ENCODE measurements at regions of chr22 and their contacts with region 1.

Region 1: GRCh38 chr22:27804470-27805297 is 3.1 kb upstream of the MN1 start:
- DNase-seq: peak; percentile 71 to 82 (median 74)
- ATAC-seq: peak in 3 of 4 donors; percentile 57 to 68 (median 67)
- H3K4me3 ChIP-seq: no peak overlapping the region
- H3K27ac ChIP-seq: no peak overlapping the region
- H3K4me1 ChIP-seq: peaks cover 0 to 38% (median 16%) of the 10 kb centered on the region in 12 donors
- H3K27me3 ChIP-seq: peaks cover 0 to 28% (median 4%) of the 10 kb centered on the region in 9 donors
- CTCF ChIP-seq: peak; percentile 54 to 81 (median 75)
- POLR2A ChIP-seq: no peak

Region 2: DNA sequence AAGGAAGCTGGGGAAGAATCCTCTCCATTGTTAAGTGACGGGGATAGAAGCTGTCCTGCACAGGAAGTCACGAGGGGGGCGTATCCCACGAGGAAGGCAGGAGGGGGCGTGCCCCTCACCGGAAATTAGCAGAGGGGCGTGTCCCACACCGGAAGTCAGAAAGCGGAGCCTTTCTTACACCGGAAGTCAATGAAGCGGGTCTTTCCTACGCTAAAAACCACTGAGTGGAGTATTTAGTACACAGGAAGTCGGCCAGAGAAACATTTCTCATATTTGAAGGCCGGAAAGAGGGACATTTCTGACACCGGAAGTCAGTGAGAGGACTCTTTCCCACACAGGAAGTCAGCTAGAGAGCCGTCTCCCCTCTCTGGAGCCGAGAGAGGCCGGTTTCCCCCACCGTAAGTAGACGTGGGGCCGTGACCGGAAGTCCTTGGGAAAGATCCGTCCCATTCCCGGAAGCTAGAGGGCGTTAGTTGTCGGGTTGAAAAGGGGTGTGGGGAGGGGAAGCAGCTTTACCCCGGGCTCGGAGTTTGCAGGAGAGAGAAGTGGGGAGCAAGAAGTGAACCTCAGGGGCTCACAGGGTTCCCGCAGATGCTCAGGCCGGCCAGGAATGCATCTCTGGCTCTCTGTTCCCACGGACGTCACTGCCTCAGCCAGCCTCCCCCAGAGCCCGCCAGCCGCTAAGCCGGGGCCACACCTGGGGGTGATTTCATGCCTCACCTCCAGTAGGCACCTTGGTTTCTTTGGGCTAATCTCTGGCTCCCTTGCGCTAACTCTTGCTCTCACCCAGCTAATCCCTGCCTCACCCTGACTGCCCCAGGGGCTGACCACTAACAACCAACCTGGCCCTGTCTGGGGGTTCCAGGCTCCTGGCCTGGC is 1131.9 kb before region 1 on chr22:
- intact Hi-C with region 1: loop called in 6 of 10 experiments (anchors 5 to 10 kb)
- DNase-seq: peak; percentile 92 to 95 (median 94)
- ATAC-seq: peak; percentile 92 to 96 (median 93)
- H3K4me3 ChIP-seq: peak overlapping the region; percentile 40 to 92 (median 78)
- H3K27ac ChIP-seq: peak overlapping the region; percentile 92 to 100 (median 96)
- H3K4me1 ChIP-seq: peaks cover 0 to 49% (median 24%) of the 10 kb centered on the region in 12 donors
- H3K27me3 ChIP-seq: no peaks in the 10 kb centered on the region
- CTCF ChIP-seq: peak; percentile 31 to 80 (median 56)
- POLR2A ChIP-seq: peak in 1 of 2 donors; percentile 11

Region 3: GRCh38 chr22:26756675-26757293 is 1047.9 kb before region 1 on chr22:
- intact Hi-C with region 1: loop called in 9 of 10 experiments (anchors 1 to 5 kb)
- DNase-seq: peak; percentile 50 to 79 (median 67)
- ATAC-seq: peak; percentile 53 to 93 (median 83)
- H3K4me3 ChIP-seq: peak overlapping the region in 10 of 12 donors; percentile 8 to 42 (median 37)
- H3K27ac ChIP-seq: no peak overlapping the region
- H3K4me1 ChIP-seq: peaks cover 0 to 7% (median 0%) of the 10 kb centered on the region in 12 donors
- H3K27me3 ChIP-seq: no peaks in the 10 kb centered on the region
- CTCF ChIP-seq: peak; percentile 82 to 98 (median 92)
- POLR2A ChIP-seq: no peak

Region 4: GRCh38 chr22:27489176-27489675 is 315.5 kb before region 1 on chr22:
- intact Hi-C with region 1: loop called in 2 of 10 experiments (anchors 5 kb)
- DNase-seq: no peak
- ATAC-seq: no peak
- H3K4me3 ChIP-seq: no peak overlapping the region
- H3K27ac ChIP-seq: no peak overlapping the region
- H3K4me1 ChIP-seq: peaks cover 0 to 7% (median 0%) of the 10 kb centered on the region in 12 donors
- H3K27me3 ChIP-seq: peaks cover 0 to 15% (median 0%) of the 10 kb centered on the region in 9 donors
- CTCF ChIP-seq: no peak
- POLR2A ChIP-seq: no peak

Region 5: GRCh38 chr22:27632451-27633295 is 172.0 kb before region 1 on chr22:
- intact Hi-C with region 1: loop called in 7 of 10 experiments (anchors 5 to 10 kb)
- DNase-seq: peak; percentile 71 to 87 (median 78)
- ATAC-seq: peak; percentile 70 to 84 (median 82)
- H3K4me3 ChIP-seq: no peak overlapping the region
- H3K27ac ChIP-seq: peak overlapping the region in 4 of 12 donors; percentile 32 to 59 (median 42)
- H3K4me1 ChIP-seq: peaks cover 0 to 29% (median 8%) of the 10 kb centered on the region in 12 donors
- H3K27me3 ChIP-seq: no peaks in the 10 kb centered on the region
- CTCF ChIP-seq: no peak
- POLR2A ChIP-seq: no peak

Region 6: DNA sequence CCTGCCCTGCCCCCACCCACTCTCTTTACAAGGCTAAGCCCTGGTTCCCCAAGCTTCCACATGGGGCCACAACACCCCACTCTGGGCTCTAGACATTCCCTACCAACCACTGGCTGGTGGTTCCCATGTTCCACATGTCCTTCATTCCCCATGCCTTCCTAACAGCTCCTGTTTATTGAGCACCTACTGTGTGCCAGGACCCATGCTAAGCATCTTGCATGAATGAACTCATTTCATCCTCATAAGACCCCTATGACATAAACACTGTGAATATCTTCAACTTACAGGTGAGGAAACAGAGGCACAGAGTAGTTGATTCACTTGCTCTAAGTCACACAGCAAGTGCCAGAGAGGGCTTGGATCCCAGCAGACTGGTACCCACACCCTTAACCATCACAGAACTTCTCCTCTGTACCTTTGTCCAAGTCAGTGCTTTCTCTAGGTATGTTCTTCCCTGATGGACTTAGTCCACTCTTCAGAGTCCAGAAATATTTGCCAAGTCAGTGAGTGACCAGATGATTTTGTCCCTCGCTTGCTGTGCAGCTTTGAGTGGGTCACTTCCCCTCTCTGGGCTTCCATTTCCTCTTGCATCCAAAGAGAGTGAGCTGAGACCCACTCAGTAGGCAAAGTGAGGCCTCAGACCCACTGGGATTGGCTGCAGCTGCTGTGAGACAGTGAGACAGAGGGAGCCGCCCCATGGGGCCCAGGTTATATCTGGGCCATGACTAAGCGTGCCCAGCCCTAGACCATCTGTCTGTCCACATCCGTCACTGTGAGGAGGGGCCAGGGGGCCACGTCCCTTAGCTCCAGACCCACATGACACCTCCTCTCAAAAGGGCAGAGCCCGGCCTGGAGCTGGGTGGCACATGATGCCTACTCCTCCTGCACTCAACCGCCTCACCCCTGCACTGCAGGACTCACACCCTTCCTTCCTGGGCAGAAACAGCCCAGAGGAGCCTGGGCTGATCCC is 135.6 kb before region 1 on chr22:
- intact Hi-C with region 1: loop called in 2 of 10 experiments (anchors 2 to 10 kb)
- DNase-seq: peak; percentile 85 to 96 (median 90)
- ATAC-seq: peak; percentile 93 to 96 (median 95)
- H3K4me3 ChIP-seq: no peak overlapping the region
- H3K27ac ChIP-seq: peak overlapping the region; percentile 64 to 93 (median 87)
- H3K4me1 ChIP-seq: peaks cover 12 to 49% (median 35%) of the 10 kb centered on the region in 12 donors
- H3K27me3 ChIP-seq: no peaks in the 10 kb centered on the region
- CTCF ChIP-seq: no peak
- POLR2A ChIP-seq: peak in 1 of 2 donors; percentile 50

Region 7: GRCh38 chr22:27726697-27727449 is 77.8 kb before region 1 on chr22:
- intact Hi-C with region 1: loop called in 5 of 10 experiments (anchors 2 to 5 kb)
- DNase-seq: peak; percentile 62 to 88 (median 83)
- ATAC-seq: peak; percentile 83 to 96 (median 95)
- H3K4me3 ChIP-seq: peak overlapping the region in 1 of 12 donors; percentile 19
- H3K27ac ChIP-seq: peak overlapping the region; percentile 45 to 96 (median 84)
- H3K4me1 ChIP-seq: peaks cover 0 to 28% (median 14%) of the 10 kb centered on the region in 12 donors
- H3K27me3 ChIP-seq: no peaks in the 10 kb centered on the region
- CTCF ChIP-seq: peak in 2 of 12 donors; percentile 5 to 7
- POLR2A ChIP-seq: no peak